Activated naive CD4-positive, alpha-beta T cell treated with anti-CD3 and anti-CD28 coated beads, Interleukin-2, amount 10 ng/mL, durations not matched to agents 7 days and 5 days (primary cell): ENCODE measurements at regions of chr14 and their contacts with region 1.

Region 1: DNA sequence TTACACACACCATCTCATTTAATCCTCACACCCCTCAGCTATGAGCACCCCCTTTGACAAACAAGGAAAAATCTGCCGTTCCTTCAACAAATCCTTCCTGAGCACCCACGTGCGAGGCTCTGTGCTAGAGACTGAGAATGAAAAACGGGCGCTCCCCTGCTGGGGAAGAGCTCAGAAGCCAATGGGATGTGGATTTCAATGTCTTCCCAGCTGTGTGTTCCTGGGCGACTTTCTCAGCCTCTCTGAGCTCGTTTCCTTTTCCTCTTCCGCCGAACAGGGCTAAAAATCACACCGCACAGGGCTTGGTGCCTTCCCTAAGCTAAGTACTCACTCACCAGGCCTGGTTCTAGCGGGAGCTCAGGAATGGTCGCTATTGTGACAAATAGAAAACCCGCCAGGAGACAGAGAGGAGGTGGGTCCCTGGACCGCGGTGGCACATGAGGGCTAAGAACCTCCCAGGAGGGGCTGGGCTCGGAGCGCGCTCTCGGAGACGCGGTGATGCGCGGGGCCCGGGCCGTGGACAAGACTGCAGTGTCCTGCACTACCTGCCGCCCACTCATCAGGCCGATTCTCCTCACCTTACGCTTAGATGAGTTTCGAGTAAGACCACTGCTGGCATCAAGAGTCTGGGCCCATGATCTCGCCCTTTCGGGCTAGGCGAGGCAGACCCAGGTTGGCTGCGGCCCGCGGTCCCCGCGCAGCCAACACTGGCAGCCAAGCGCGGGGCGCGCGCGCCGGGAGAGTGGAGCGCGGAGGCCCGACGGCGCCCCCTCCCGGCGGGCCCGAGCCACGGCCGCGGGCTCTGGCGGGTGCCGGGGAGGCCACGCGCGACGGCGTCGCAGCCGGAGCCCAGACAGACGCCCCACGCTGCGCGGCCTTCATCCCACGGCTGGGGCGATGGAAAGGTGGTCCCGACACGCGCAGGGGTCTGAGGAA is 17.0 kb downstream of the ZDHHC22 start:
- DNase-seq: peak; percentile 73
- H3K4me3 Mint-ChIP-seq: peak overlapping the region; percentile 74
- H3K27ac Mint-ChIP-seq: peak overlapping the region; percentile 83
- H3K4me1 Mint-ChIP-seq: peaks cover 54% of the 10 kb centered on the region
- H3K27me3 Mint-ChIP-seq: peaks cover 59% of the 10 kb centered on the region

Region 2: GRCh38 chr14:77097700-77098528 is 26.7 kb before region 1 on chr14 and contains the start of gene CIPC:
- CTCF ChIA-PET with region 1: interaction called, 30 read pairs
- DNase-seq: peak; percentile 100
- H3K4me3 Mint-ChIP-seq: peak within 1 kb of the TSS; percentile 99
- H3K27ac Mint-ChIP-seq: peak within 1 kb of the TSS; percentile 97
- H3K4me1 Mint-ChIP-seq: peaks cover 34% of the 10 kb centered on the region
- H3K27me3 Mint-ChIP-seq: peaks cover 6% of the 10 kb centered on the region

Region 3: GRCh38 chr14:77111043-77111442 is 13.6 kb before region 1 on chr14:
- CTCF ChIA-PET with region 1: interaction called, 12 read pairs
- DNase-seq: no peak
- H3K4me3 Mint-ChIP-seq: no peak overlapping the region
- H3K27ac Mint-ChIP-seq: no peak overlapping the region
- H3K4me1 Mint-ChIP-seq: no peaks in the 10 kb centered on the region
- H3K27me3 Mint-ChIP-seq: no peaks in the 10 kb centered on the region